ENCODE measurements at regions of chr5 and their contacts with region 1.

Region 1: DNA sequence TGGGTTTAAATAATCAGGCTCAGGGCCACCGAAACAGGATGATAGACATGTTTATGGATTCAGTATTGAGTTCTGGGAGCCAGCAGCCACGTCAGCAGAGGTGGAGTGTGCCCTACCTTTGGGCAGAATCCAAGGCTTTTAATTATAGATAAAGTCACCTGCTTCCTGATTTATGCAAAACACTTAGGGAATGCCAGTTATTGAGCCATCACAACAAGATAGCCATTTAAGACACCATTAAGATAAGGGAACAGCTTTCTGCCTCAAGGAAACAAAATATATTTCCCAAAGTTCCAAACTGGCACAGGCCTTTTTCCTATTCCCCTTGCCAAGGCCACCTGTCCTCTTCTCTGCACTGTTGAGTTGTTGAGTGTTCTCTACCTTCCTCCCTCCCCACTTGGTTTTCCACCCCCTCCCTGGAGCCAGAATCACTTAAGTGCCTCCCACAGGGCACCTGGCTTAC is 2.4 kb downstream of the CCL28 start:
- DNase-seq: no peak
- ATAC-seq: no peak
- H3K4me3 ChIP-seq: no peak overlapping the region
- H3K27ac ChIP-seq: no peak overlapping the region
- H3K4me1 ChIP-seq: no peaks in the 10 kb centered on the region
- H3K27me3 ChIP-seq: no peaks in the 10 kb centered on the region
- CTCF ChIP-seq: no peak
- EP300 ChIP-seq: no peak
- POLR2A ChIP-seq: no peak
- RAD21 ChIP-seq: no peak

Region 2: GRCh38 chr5:43137326-43137725 is 272.5 kb before region 1 on chr5:
- CTCF ChIA-PET with region 1: no interaction called
- POLR2A ChIA-PET with region 1: no interaction called
- RAD21 ChIA-PET with region 1: no interaction called
- SMC1A ChIA-PET with region 1: no interaction called
- in situ Hi-C with region 1: no loop called
- intact Hi-C with region 1: no loop called
- DNase-seq: no peak
- ATAC-seq: peak; percentile 79
- H3K4me3 ChIP-seq: no peak overlapping the region
- H3K27ac ChIP-seq: no peak overlapping the region
- H3K4me1 ChIP-seq: peaks cover 18% of the 10 kb centered on the region
- H3K27me3 ChIP-seq: no peaks in the 10 kb centered on the region
- CTCF ChIP-seq: no peak
- EP300 ChIP-seq: 0 out of 4 replicates have a peak, but pooled peaks of 1 of the 2 experiments have one; percentile 17
- POLR2A ChIP-seq: no peak
- RAD21 ChIP-seq: no peak

Region 3: GRCh38 chr5:43396762-43397304 is 13.0 kb before region 1 on chr5:
- CTCF ChIA-PET with region 1: interaction called, 10 read pairs
- POLR2A ChIA-PET with region 1: interaction called, 4 read pairs
- RAD21 ChIA-PET with region 1: no interaction called
- SMC1A ChIA-PET with region 1: no interaction called
- in situ Hi-C with region 1: no loop called
- intact Hi-C with region 1: no loop called
- DNase-seq: peak; percentile 17
- ATAC-seq: peak; percentile 94
- H3K4me3 ChIP-seq: peak overlapping the region; percentile 64
- H3K27ac ChIP-seq: peak overlapping the region; percentile 52
- H3K4me1 ChIP-seq: no peaks in the 10 kb centered on the region
- H3K27me3 ChIP-seq: no peaks in the 10 kb centered on the region
- CTCF ChIP-seq: no peak
- EP300 ChIP-seq: no peak
- POLR2A ChIP-seq: peak; percentile 68
- RAD21 ChIP-seq: no peak

Region 4: GRCh38 chr5:44486591-44486990 is 1076.8 kb after region 1 on chr5:
- CTCF ChIA-PET with region 1: no interaction called
- POLR2A ChIA-PET with region 1: no interaction called
- RAD21 ChIA-PET with region 1: no interaction called
- SMC1A ChIA-PET with region 1: no interaction called
- in situ Hi-C with region 1: no loop called
- intact Hi-C with region 1: no loop called
- DNase-seq: no peak
- ATAC-seq: no peak
- H3K4me3 ChIP-seq: no peak overlapping the region
- H3K27ac ChIP-seq: no peak overlapping the region
- H3K4me1 ChIP-seq: no peaks in the 10 kb centered on the region
- H3K27me3 ChIP-seq: no peaks in the 10 kb centered on the region
- CTCF ChIP-seq: no peak
- EP300 ChIP-seq: no peak
- POLR2A ChIP-seq: no peak
- RAD21 ChIP-seq: no peak